Calu3 (cell line): ENCODE measurements at regions of chr7 and their contacts with region 1.

Region 1: GRCh38 chr7:32680259-32681173 is 185.2 kb downstream of the AVL9 start:
- DNase-seq: peak; percentile 95
- H3K4me3 Mint-ChIP-seq: peak overlapping the region; percentile 26
- H3K27ac Mint-ChIP-seq: peak overlapping the region; percentile 96
- H3K4me1 Mint-ChIP-seq: peaks cover 53% of the 10 kb centered on the region
- H3K27me3 Mint-ChIP-seq: no peaks in the 10 kb centered on the region
- CTCF ChIP-seq: no peak

Region 2: DNA sequence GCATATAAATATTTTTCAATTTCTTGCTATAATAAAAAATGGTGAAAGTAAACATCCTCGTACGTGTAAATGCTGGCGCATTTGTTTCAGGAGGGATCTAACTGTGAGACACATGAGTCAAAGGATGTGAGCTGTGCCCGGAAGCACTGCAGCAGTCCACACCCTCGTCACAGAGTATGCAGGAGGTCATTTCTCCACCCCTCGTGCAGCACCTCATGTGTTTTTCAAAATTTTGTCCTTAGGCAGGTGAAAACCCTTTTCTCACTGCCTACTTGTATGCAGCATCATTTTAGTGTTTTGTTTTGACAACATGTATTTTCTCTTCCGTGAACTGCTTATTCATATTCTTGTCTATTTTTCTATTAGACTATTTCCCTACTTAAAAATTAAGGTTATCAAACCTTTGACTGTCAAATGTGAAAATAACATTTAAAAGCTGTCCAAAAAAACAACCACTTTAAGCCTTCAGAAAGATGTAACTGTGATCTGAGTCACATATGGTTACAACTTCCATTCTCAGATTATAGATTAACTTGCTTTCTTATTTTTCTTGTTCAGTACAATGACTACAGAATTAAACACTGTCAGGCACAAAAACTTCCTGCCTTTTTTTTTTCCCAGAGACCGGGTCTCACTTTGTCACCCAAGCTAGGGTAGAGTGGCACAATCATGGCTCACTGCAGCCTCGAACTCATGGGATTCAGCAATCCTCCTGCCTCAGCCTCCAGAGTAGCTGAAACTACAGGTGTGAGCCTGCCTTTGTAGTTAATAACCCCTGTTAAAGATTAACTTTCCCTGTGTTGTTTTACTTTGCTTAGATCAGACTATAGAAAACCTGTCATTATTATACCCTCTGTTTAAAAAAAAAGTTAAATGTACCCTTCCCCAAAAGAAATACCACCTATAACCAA is 22.2 kb before region 1 on chr7:
- CTCF ChIA-PET with region 1: interaction called, 6 read pairs
- intact Hi-C with region 1: loop called (anchors 1 kb)
- DNase-seq: peak; percentile 78
- H3K4me3 Mint-ChIP-seq: peak overlapping the region; percentile 47
- H3K27ac Mint-ChIP-seq: peak overlapping the region; percentile 94
- H3K4me1 Mint-ChIP-seq: peaks cover 68% of the 10 kb centered on the region
- H3K27me3 Mint-ChIP-seq: no peaks in the 10 kb centered on the region
- CTCF ChIP-seq: no peak